Right ventricle myocardium inferior (tissue), 1 donor: ENCODE measurements at regions of chr10 and their contacts with region 1.

Region 1: GRCh38 chr10:4767033-4767814 is 58.8 kb upstream of the AKR1E2 start:
- DNase-seq: no peak
- ATAC-seq: peak; percentile 61

Region 2: GRCh38 chr10:3239066-3239919 is 1527.9 kb before region 1 on chr10:
- intact Hi-C with region 1: loop called (anchors 2 kb)
- DNase-seq: peak; percentile 89
- ATAC-seq: peak; percentile 77

Region 3: GRCh38 chr10:4101918-4102654 is 665.1 kb before region 1 on chr10:
- intact Hi-C with region 1: loop called (anchors 10 kb)
- DNase-seq: no peak
- ATAC-seq: peak; percentile 84

Region 4: DNA sequence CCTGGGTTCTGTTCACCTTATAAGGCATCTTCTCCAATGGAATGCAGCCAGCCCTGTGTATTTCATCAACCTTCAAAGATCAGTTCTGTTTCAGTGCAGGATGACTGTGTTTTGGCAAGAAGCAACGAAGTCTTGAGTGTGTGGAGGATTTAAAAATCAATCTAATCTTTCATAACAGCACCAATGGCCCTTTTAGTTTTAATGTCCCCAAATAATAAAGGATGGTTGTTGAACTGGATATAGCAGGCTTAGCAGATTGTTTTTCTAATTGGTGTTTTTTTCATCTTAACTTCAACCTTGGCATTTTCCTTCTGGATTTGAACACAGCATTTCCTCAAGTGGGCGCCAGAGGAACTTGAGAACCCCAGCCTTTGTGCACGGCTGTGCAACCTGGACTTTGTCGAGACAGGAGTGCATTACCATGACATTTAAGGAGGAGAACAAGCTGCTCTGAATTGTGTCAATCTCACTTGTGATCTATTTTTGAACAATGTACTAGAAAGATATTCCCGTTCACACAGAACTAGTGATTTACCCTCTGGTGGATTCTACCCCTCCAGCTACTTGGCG is 254.5 kb before region 1 on chr10:
- intact Hi-C with region 1: loop called (anchors 5 kb)
- DNase-seq: peak; percentile 61
- ATAC-seq: peak; percentile 64

Region 5: GRCh38 chr10:4807761-4808507 is 40.7 kb after region 1 on chr10:
- intact Hi-C with region 1: no loop called
- DNase-seq: no peak
- ATAC-seq: no peak